ENCODE measurements at regions of chr4 and their contacts with region 1.

Region 1: DNA sequence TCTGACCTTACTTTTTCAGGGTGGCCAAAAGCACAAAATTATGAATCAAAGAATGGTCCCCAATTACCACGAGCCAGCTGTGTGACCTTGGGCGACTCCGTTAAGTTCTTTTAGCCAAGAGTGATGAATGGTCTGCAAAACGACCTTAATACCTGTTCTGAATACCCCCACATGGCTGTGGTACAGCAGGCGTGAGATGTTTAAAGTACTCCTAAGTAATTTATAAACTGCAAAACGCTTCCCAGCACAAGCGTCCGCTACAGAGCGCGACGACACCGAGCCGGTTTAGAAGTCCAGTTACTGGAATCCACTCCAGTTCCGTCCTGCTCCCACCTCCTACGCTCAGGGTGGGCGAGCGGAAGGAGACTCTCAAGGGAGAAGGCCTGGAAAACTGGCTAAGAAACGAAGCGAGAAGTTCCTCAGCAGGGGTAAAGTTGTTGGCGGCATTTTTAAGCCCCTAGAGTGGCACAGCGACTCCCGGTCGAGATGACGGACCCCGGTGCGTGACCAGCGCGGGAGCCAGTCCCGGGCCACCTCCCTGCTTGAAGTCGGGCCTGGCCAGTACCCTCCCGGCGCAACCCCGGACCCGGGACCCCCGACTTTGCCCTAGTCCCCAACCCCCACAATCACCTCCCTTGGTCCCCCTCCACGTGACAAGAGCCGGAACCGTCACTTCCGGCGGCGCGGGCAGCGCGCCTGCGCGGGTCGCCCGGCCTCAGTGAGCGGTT is 683 bp upstream of the BMP2K start:
- DNase-seq: peak; percentile 87 to 94
- H3K4me3 ChIP-seq: peak overlapping the region; percentile 78 to 92
- H3K27ac ChIP-seq: peak overlapping the region; percentile 98 to 99
- H3K4me1 ChIP-seq: peaks cover 0 to 36% (median 4%) of the 10 kb centered on the region in 4 donors
- H3K27me3 ChIP-seq: no peaks in the 10 kb centered on the region
- CTCF ChIP-seq: no peak

Region 2: GRCh38 chr4:78644744-78645330 is 130.6 kb before region 1 on chr4:
- intact Hi-C with region 1: loop called (anchors 10 kb)
- DNase-seq: peak; percentile 55 to 73
- H3K4me3 ChIP-seq: no peak overlapping the region
- H3K27ac ChIP-seq: peak overlapping the region; percentile 52 to 72
- H3K4me1 ChIP-seq: peaks cover 0 to 24% (median 14%) of the 10 kb centered on the region in 4 donors
- H3K27me3 ChIP-seq: no peaks in the 10 kb centered on the region
- CTCF ChIP-seq: peak; percentile 81 to 92

Region 3: DNA sequence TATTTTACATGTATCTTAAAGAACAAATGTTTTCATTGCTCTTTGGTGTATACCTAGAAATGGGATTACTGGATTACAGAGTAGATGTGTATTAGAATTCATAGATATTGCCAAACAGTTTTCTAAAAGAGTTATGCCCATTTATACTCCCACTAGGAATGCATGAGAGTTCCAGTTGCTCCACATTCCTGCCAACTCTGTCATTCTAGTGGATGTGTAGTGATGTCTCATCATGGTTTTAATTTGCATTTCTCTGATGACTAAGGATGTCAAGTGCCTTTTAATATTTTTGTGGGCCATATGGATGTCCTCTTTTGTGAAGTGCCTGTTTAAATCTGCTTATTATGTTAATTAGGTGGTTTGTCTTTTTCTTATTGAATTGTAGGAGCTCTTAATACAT is 64.9 kb before region 1 on chr4:
- intact Hi-C with region 1: no loop called
- DNase-seq: no peak
- H3K4me3 ChIP-seq: no peak overlapping the region
- H3K27ac ChIP-seq: no peak overlapping the region
- H3K4me1 ChIP-seq: no peaks in the 10 kb centered on the region
- H3K27me3 ChIP-seq: no peaks in the 10 kb centered on the region
- CTCF ChIP-seq: no peak